HCT116 (cell line): ENCODE measurements at regions of chr6 and their contacts with region 1.

Region 1: GRCh38 chr6:150813319-150813992 is 52.0 kb upstream of the MTHFD1L start:
- DNase-seq: peak; percentile 92
- ATAC-seq: peak; percentile 69
- H3K4me3 ChIP-seq: peak overlapping the region; percentile 11 to 47
- H3K27ac ChIP-seq: peak overlapping the region; percentile 90
- H3K4me1 ChIP-seq: peaks cover 30 to 39% of the 10 kb centered on the region in 2 experiments
- H3K27me3 ChIP-seq: no peaks in the 10 kb centered on the region
- CTCF ChIP-seq: no peak
- POLR2A ChIP-seq: no peak
- RAD21 ChIP-seq: peak; percentile 49

Region 2: DNA sequence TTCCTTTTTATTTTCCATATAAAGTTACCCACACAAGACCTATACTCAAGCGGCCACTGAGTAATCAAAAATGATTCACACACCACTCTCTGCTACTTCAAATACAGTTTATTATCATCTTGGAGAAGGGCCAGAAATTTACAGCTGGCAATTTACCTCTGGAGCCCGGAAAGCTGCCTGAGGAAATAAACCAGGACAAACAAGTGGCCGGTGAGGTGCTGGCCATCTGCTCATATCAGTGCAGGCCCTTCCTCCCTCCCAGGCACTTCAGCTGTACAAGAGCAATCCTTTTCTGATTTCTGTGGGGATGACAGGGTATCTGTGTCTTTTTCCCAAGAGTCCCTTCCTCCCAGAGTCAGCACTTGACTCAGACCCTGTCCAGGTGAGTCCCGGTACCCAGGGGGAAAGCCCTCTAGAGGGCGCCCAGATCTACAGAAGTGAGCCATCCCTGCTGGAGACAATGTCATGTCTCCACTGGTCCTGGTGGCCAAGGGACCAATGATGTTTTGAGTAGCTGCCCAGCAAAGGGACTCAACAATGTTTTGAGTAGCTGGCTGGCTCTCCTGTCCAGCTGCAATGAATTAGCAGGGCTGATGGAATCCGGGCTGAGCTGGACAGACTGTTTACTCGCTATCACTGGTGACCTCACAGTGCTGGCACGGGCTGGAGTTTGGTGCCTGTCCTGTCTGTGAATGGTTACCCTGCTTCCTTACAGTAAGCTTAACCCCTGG is 972.9 kb before region 1 on chr6:
- CTCF ChIA-PET with region 1: interaction called, 3 read pairs
- POLR2A ChIA-PET with region 1: no interaction called
- RAD21 ChIA-PET with region 1: no interaction called
- intact Hi-C with region 1: loop called (anchors 10 kb)
- DNase-seq: peak; percentile 68
- ATAC-seq: peak; percentile 99
- H3K4me3 ChIP-seq: no peak overlapping the region
- H3K27ac ChIP-seq: no peak overlapping the region
- H3K4me1 ChIP-seq: peaks cover 19 to 36% of the 10 kb centered on the region in 2 experiments
- H3K27me3 ChIP-seq: no peaks in the 10 kb centered on the region
- CTCF ChIP-seq: peak; percentile 84 to 93 (median 92)
- POLR2A ChIP-seq: no peak
- RAD21 ChIP-seq: peak; percentile 96

Region 3: DNA sequence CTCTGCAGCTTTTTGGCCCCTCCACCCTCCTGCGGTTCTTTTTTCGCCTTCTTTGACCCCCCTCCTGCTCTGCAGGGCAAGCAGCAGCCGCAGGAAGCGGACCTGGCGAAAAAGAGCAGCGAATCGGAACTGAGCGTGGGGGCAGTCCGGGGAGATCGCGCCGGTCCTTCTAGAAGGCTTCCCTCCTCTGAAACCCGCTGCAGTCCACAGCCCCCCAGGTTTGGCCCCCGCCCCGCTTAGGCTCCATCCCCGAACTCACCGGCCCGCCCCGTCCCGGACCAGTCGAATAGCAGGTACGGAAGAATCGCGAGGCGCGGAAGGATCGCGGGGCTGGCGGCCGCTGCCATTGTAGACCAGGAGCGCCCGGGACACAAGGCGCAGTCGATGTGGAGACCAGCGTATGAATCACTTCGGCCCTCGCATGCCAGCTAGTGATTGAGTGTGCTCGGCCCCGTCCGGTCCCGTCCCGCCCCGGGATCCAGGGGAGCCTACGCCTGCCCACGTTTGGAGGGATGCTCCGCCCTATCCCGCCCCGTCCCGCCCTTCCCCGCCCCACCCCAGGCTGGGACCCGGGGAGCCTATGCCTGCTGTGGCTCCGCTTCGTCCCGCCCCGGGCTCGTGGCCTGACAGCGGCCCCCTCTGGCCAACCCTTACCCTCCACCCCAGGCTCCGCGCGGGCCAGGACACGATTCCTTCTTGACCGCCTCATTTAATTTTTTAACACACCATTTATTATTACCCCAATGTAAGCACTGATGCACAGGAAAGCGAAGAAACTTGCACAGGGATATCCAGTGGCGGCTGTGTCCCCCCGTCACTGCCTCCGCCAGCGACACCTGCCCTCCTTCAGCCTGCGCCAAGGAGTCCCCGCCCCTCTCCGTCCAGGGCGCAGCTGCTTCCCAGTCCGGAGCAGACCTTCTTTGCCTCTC is 744.5 kb before region 1 on chr6 and contains the start of gene ULBP3:
- CTCF ChIA-PET with region 1: interaction called, 13 read pairs
- POLR2A ChIA-PET with region 1: no interaction called
- RAD21 ChIA-PET with region 1: no interaction called
- intact Hi-C with region 1: loop called (anchors 2 kb)
- DNase-seq: peak; percentile 89
- ATAC-seq: peak; percentile 87
- H3K4me3 ChIP-seq: peak within 1 kb of the TSS; percentile 81 to 92
- H3K27ac ChIP-seq: peak within 1 kb of the TSS; percentile 53
- H3K4me1 ChIP-seq: peaks cover 20 to 49% of the 10 kb centered on the region in 2 experiments
- H3K27me3 ChIP-seq: no peaks in the 10 kb centered on the region
- CTCF ChIP-seq: peak in 2 of 3 experiments; percentile 60 to 72; a peak in 4 of 6 replicates
- POLR2A ChIP-seq: peak; percentile 83
- RAD21 ChIP-seq: no peak
- total RNA-seq, gene ULBP3: 18.4 TPM

Region 4: GRCh38 chr6:150334790-150335783 is 478.4 kb before region 1 on chr6:
- CTCF ChIA-PET with region 1: interaction called, 4 read pairs
- POLR2A ChIA-PET with region 1: no interaction called
- RAD21 ChIA-PET with region 1: no interaction called
- intact Hi-C with region 1: loop called (anchors 2 kb)
- DNase-seq: peak; percentile 80
- ATAC-seq: peak; percentile 74
- H3K4me3 ChIP-seq: no peak overlapping the region
- H3K27ac ChIP-seq: no peak overlapping the region
- H3K4me1 ChIP-seq: peaks cover 0 to 8% of the 10 kb centered on the region in 2 experiments; a peak in 2 of 4 replicates
- H3K27me3 ChIP-seq: no peaks in the 10 kb centered on the region
- CTCF ChIP-seq: peak; percentile 70 to 94 (median 91)
- POLR2A ChIP-seq: no peak
- RAD21 ChIP-seq: peak; percentile 98

Region 5: GRCh38 chr6:150417899-150418826 is 395.3 kb before region 1 on chr6:
- CTCF ChIA-PET with region 1: interaction called, 97 read pairs
- POLR2A ChIA-PET with region 1: interaction called, 25 read pairs
- RAD21 ChIA-PET with region 1: interaction called, 11 read pairs
- intact Hi-C with region 1: loop called (anchors 1 kb)
- DNase-seq: peak; percentile 88
- ATAC-seq: peak; percentile 83
- H3K4me3 ChIP-seq: peak overlapping the region; percentile 13 to 50
- H3K27ac ChIP-seq: peak overlapping the region; percentile 40; the same call in 1 of the 2 replicates
- H3K4me1 ChIP-seq: peaks cover 13 to 20% of the 10 kb centered on the region in 2 experiments
- H3K27me3 ChIP-seq: no peaks in the 10 kb centered on the region
- CTCF ChIP-seq: peak; percentile 80 to 88 (median 83)
- POLR2A ChIP-seq: no peak
- RAD21 ChIP-seq: peak; percentile 96

Region 6: DNA sequence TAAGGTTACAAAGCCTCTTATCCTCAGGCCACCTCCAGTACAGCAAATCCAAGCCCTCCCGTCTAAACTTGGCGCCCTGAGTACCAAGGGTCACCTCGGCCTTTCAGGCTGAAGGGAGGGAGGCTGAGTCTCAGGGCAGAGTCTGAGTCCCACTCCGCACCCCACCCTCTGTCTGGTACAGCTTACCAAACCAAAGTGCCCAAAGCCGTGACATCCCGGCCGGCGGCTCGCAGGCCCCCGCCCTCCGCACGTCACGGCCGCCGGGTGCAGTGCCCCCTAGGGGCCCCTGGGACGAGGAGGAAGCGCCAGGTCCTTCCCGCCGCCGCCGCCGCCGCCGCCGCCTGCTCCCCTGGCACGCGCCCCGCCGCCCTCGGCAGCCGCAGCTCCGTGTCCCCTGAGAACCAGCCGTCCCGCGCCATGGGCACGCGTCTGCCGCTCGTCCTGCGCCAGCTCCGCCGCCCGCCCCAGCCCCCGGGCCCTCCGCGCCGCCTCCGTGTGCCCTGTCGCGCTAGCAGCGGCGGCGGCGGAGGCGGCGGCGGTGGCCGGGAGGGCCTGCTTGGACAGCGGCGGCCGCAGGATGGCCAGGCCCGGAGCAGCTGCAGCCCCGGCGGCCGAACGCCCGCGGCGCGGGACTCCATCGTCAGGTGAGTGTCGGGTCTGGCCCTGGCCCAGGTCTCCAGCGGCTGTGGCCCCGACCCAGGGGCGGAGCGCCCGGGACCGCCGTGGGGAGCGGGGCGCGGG is 52.1 kb after region 1 on chr6 and contains the start of gene MTHFD1L:
- CTCF ChIA-PET with region 1: interaction called, 5 read pairs
- POLR2A ChIA-PET with region 1: no interaction called
- RAD21 ChIA-PET with region 1: interaction called in 1 of 2 experiments, 3 read pairs
- intact Hi-C with region 1: loop called (anchors 2 kb)
- DNase-seq: peak; percentile 44
- ATAC-seq: peak; percentile 81
- H3K4me3 ChIP-seq: peak within 1 kb of the TSS; percentile 68 to 80
- H3K27ac ChIP-seq: peak within 1 kb of the TSS; percentile 93
- H3K4me1 ChIP-seq: peaks cover 6 to 23% of the 10 kb centered on the region in 2 experiments
- H3K27me3 ChIP-seq: no peaks in the 10 kb centered on the region
- CTCF ChIP-seq: peak in 2 of 3 experiments; percentile 59 to 61; a peak in 4 of 6 replicates
- POLR2A ChIP-seq: peak; percentile 39
- RAD21 ChIP-seq: peak; percentile 48
- total RNA-seq, gene MTHFD1L: 127 TPM